ENCODE measurements at regions of chr21 and their contacts with region 1.

Region 1: GRCh38 chr21:29056005-29056404 is 17.4 kb downstream of the CCT8 start:
- DNase-seq: no peak
- ATAC-seq: no peak
- H3K4me3 Mint-ChIP-seq: no peak overlapping the region
- H3K27ac Mint-ChIP-seq: no peak overlapping the region
- H3K4me1 Mint-ChIP-seq: no peaks in the 10 kb centered on the region
- H3K27me3 Mint-ChIP-seq: no peaks in the 10 kb centered on the region
- CTCF ChIP-seq: no peak

Region 2: GRCh38 chr21:29034678-29035077 is 21.3 kb before region 1 on chr21:
- CTCF ChIA-PET with region 1: no interaction called
- POLR2A ChIA-PET with region 1: interaction called, 3 read pairs
- intact Hi-C with region 1: loop called (anchors 2 kb)
- DNase-seq: no peak
- ATAC-seq: no peak
- H3K4me3 Mint-ChIP-seq: no peak overlapping the region
- H3K27ac Mint-ChIP-seq: no peak overlapping the region
- H3K4me1 Mint-ChIP-seq: peaks cover 6% of the 10 kb centered on the region
- H3K27me3 Mint-ChIP-seq: no peaks in the 10 kb centered on the region
- CTCF ChIP-seq: no peak

Measured in activated B cell treated with CpG ODN at 0.5 μM for 24 hours (primary cell).